ENCODE measurements at regions of chr13 and their contacts with region 1.

Region 1: DNA sequence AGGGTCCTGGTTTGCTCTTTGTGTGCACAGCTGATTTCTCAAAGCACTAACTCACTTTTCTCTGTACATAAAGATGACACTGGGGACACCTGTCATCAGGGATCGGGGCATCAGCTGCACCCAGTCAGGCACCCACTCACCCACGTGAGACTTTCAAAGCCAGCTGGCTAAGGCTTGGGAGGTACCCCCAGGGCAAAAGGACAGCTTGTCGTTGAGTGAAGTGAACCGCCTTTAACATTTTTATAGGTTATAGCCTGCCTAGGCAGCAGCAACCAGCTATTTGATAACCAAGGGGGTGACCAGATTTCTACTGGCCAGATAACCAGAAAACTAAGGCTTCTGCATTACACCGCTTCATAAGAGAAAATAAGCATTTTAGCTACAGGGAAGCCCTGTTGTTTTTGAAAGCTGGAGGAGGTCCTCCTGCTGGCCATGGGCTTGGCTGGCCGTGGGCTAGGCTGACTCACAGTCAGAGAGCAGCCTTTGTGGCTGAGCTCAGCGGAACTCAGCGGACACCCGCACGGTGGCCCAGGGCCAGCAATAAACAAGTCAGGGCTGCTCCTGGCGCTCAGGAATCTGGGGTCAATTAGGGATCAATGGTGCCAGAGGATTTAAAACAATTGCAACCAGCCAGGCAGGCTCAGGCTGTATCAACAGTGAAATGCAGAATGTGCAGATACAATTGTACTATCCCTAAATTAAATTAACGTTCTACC is 57.1 kb downstream of the ALOX5AP start:
- DNase-seq: no peak
- ATAC-seq: no peak
- H3K4me3 ChIP-seq: no peak overlapping the region
- H3K27ac ChIP-seq: no peak overlapping the region
- H3K4me1 ChIP-seq: peaks cover 11% of the 10 kb centered on the region
- H3K27me3 ChIP-seq: no peaks in the 10 kb centered on the region
- CTCF ChIP-seq: no peak
- EP300 ChIP-seq: no peak
- POLR2A ChIP-seq: no peak
- RAD21 ChIP-seq: no peak

Region 2: DNA sequence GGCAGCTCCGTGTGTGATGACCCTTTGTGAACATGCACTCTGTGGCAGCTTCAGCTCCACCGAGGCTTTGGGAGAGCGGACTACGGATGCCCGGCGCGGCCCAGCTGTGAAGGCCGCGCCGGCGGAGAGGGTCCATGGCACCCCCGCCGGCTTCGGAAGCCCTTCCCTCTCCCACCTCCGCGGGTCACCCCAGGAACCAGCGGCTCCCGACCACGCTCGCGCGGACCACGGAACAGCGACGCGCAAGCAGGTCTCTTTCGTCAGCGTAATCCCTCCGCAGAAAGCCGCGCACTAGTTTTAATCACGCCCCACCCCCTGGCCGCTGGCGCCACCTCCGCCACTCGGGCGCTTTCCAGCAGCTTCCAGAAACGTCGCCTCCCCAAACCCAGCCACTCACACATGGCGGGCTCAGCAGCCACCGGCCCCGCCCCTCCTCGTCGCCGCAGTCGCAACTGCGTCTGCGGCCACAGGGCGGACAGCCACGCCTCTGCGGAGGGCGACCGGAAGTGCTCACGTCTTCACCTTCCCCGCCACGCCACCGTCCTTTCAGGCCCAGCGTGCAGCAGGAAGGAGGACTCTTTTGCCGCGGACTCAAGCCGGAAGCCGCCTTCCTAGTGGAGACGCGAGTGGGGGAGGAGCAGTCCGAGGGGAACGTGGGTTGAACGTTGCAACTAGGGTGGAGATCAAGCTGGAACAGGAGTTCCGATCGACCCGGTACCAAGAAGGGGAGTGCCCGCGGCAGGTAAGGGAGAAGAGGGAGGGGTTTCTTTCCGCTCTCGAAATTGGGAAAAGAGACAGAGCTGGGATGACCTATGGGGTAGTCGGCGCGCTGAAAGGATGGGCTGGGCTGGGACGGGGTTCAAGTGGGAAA is 174.9 kb before region 1 on chr13 and contains the start of gene USPL1:
- CTCF ChIA-PET with region 1: interaction called, 4 read pairs
- POLR2A ChIA-PET with region 1: no interaction called
- RAD21 ChIA-PET with region 1: interaction called, 3 read pairs
- SMC1A ChIA-PET with region 1: interaction called, 23 read pairs
- in situ Hi-C with region 1: no loop called
- intact Hi-C with region 1: no loop called
- DNase-seq: peak; percentile 96
- ATAC-seq: peak; percentile 91
- H3K4me3 ChIP-seq: peak within 1 kb of the TSS; percentile 91
- H3K27ac ChIP-seq: peak within 1 kb of the TSS; percentile 93
- H3K4me1 ChIP-seq: peaks cover 8% of the 10 kb centered on the region
- H3K27me3 ChIP-seq: no peaks in the 10 kb centered on the region
- CTCF ChIP-seq: peak in 1 of 3 experiments; percentile 6; a peak in 1 of 6 replicates
- EP300 ChIP-seq: peak; percentile 84 to 95
- POLR2A ChIP-seq: peak; percentile 93
- RAD21 ChIP-seq: peak; percentile 17; the same call in 1 of the 2 replicates
- polyA plus RNA-seq, gene USPL1: 7.9 to 8.0 TPM

Region 3: DNA sequence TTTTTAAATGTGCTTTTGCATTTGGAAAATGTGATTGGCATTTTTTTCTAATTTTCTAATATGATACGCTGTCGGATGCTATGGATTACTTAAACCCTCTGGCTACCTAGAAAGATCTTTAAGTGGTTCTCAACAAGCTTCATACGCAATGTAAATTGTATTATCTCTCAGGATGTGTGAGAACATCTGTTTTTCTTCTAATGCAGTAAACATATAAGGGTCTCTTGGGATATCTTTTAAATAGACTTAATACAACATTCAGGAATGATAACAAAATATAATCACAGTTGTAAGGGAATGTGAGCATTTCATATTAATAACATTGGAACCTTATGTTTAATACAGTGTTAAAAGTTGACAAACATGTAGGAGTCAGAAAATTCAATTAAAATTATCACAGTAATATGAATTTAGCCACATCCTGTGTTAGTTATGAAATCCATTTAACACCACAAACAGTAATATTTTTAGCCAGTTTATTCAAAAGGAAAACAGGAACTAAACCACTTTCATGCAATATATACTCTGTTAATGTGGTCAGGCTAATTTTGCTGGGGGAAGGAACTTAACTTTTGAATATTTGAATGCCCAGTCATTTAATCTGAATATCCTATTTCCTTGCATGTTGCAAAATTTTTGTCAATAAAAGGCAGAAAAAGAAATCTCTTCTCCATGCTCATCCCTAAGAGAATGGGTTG is 72.1 kb before region 1 on chr13:
- CTCF ChIA-PET with region 1: interaction called, 3 read pairs
- POLR2A ChIA-PET with region 1: no interaction called
- RAD21 ChIA-PET with region 1: no interaction called
- SMC1A ChIA-PET with region 1: interaction called, 10 read pairs
- in situ Hi-C with region 1: no loop called
- intact Hi-C with region 1: no loop called
- DNase-seq: peak; percentile 59
- ATAC-seq: peak; percentile 90
- H3K4me3 ChIP-seq: peak overlapping the region; percentile 27
- H3K27ac ChIP-seq: no peak overlapping the region
- H3K4me1 ChIP-seq: peaks cover 29% of the 10 kb centered on the region
- H3K27me3 ChIP-seq: no peaks in the 10 kb centered on the region
- CTCF ChIP-seq: no peak
- EP300 ChIP-seq: peak; percentile 86 to 89
- POLR2A ChIP-seq: no peak
- RAD21 ChIP-seq: no peak

Region 4: GRCh38 chr13:30745906-30746686 is 46.3 kb before region 1 on chr13:
- CTCF ChIA-PET with region 1: interaction called, 4 read pairs
- POLR2A ChIA-PET with region 1: interaction called, 14 read pairs
- RAD21 ChIA-PET with region 1: interaction called, 66 read pairs
- SMC1A ChIA-PET with region 1: interaction called, 51 read pairs
- in situ Hi-C with region 1: no loop called
- intact Hi-C with region 1: loop called (anchors 2 kb)
- DNase-seq: no peak
- ATAC-seq: peak; percentile 12; the same call in 2 of the 3 replicates
- H3K4me3 ChIP-seq: no peak overlapping the region
- H3K27ac ChIP-seq: no peak overlapping the region
- H3K4me1 ChIP-seq: peaks cover 18% of the 10 kb centered on the region
- H3K27me3 ChIP-seq: no peaks in the 10 kb centered on the region
- CTCF ChIP-seq: no peak
- EP300 ChIP-seq: no peak
- POLR2A ChIP-seq: no peak
- RAD21 ChIP-seq: no peak

Region 5: DNA sequence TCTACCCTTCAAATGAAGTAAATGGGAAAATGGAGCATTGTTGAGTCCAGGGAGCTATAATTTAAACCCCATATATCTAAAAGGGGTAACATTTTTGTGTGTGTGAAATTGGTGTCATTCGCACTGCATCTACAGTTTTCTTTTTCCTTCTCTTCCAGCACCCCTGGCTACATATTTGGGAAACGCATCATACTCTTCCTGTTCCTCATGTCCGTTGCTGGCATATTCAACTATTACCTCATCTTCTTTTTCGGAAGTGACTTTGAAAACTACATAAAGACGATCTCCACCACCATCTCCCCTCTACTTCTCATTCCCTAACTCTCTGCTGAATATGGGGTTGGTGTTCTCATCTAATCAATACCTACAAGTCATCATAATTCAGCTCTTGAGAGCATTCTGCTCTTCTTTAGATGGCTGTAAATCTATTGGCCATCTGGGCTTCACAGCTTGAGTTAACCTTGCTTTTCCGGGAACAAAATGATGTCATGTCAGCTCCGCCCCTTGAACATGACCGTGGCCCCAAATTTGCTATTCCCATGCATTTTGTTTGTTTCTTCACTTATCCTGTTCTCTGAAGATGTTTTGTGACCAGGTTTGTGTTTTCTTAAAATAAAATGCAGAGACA is 28.5 kb before region 1 on chr13:
- CTCF ChIA-PET with region 1: interaction called, 14 read pairs
- POLR2A ChIA-PET with region 1: no interaction called
- RAD21 ChIA-PET with region 1: interaction called, 16 read pairs
- SMC1A ChIA-PET with region 1: interaction called, 7 read pairs
- in situ Hi-C with region 1: no loop called
- intact Hi-C with region 1: no loop called
- DNase-seq: no peak
- ATAC-seq: no peak
- H3K4me3 ChIP-seq: no peak overlapping the region
- H3K27ac ChIP-seq: no peak overlapping the region
- H3K4me1 ChIP-seq: peaks cover 11% of the 10 kb centered on the region
- H3K27me3 ChIP-seq: no peaks in the 10 kb centered on the region
- CTCF ChIP-seq: no peak
- EP300 ChIP-seq: no peak
- POLR2A ChIP-seq: no peak
- RAD21 ChIP-seq: no peak